HEK293 (cell line): ENCODE measurements at regions of chr3 and their contacts with region 1.

Region 1: DNA sequence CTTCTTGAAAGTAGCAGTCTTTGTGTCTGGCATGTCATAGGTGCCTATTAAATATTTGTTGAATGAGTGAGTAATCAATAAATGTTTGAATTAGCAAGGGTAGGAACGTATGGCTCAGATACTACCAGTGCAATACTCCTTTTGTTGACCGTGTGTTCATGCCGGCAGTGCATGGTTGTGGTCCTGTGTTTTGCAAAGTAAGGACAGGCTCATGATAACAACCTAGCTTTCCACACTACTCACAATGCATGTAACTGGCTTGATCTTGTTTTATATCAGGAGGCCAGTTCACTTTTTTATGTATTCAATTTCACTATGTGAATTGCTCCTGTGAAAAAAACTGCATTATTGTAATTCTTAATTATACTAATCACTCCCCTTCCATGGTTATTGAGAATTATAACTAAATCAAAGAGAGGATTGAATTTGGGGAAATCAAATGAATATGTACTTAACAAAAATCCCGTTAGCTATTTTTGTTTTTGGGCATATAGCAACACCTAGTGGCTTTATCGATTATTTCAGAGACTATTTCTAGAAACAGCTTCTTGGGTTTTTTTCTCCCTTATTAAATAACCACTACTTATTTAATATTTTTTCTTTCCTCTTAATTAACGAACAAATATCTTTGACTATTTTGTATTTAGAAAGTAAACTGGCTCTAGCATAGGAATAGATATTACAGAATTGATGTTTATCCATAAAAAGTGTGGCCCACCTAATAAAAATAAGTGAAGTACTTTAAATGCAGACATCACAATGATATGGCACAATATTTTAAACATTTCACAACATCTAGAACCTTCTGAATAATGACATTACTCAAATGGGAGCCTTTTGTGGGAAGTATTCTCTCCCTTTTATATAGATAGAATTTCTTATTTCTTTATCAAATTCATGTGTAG is 218.5 kb downstream of the BBX start:
- H3K4me3 ChIP-seq: no peak overlapping the region
- H3K27ac ChIP-seq: no peak overlapping the region
- H3K4me1 ChIP-seq: no peaks in the 10 kb centered on the region
- CTCF ChIP-seq: 0 out of 2 replicates have a peak, but pooled peaks have one; percentile 8

Region 2: GRCh38 chr3:107753480-107753879 is 12.2 kb after region 1 on chr3:
- CTCF ChIA-PET with region 1: interaction called, 10 read pairs
- POLR2A ChIA-PET with region 1: no interaction called
- H3K4me3 ChIP-seq: no peak overlapping the region
- H3K27ac ChIP-seq: no peak overlapping the region
- H3K4me1 ChIP-seq: no peaks in the 10 kb centered on the region
- CTCF ChIP-seq: peak; percentile 35; the same call in 1 of the 2 replicates

Region 3: GRCh38 chr3:107765524-107765923 is 24.3 kb after region 1 on chr3:
- CTCF ChIA-PET with region 1: no interaction called
- POLR2A ChIA-PET with region 1: no interaction called
- H3K4me3 ChIP-seq: no peak overlapping the region
- H3K27ac ChIP-seq: no peak overlapping the region
- H3K4me1 ChIP-seq: no peaks in the 10 kb centered on the region
- CTCF ChIP-seq: no peak

Region 4: GRCh38 chr3:107904536-107905066 is 163.4 kb after region 1 on chr3:
- CTCF ChIA-PET with region 1: no interaction called
- POLR2A ChIA-PET with region 1: no interaction called
- H3K4me3 ChIP-seq: no peak overlapping the region
- H3K27ac ChIP-seq: no peak overlapping the region
- H3K4me1 ChIP-seq: no peaks in the 10 kb centered on the region
- CTCF ChIP-seq: no peak